ENCODE measurements at regions of chr21 and their contacts with region 1.

Region 1: DNA sequence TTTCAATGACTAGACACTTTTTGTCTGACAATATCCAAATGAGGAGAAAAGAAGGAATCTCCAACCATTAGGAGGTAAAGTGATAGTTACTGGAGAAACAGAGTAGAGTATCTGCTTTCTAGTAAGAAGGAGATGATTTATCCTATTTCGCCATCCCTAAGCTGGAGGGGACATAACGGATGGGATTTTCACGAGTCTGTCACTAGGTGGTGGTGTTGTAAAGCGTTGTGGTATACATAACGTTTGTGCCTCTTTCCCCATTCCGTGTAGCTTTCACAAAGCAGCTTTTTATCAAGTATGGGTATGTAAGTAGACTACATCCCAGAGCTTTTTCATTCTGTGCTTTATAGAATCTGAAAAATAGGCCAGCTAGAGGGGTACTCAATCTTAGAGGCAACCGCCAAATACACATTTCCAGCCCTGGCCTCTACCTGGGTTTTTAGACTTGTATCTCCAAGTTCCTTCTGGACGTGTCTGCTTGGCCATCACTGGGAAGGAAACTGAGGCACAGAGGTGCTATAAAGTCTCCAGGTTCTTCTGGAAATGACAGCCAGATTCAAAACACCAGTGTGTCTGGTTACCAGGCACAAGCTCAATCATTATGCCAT is 33.3 kb upstream of the FAM3B start:
- DNase-seq: peak in 1 of 5 donors; percentile 62
- H3K4me3 ChIP-seq: no peak overlapping the region
- H3K27ac ChIP-seq: no peak overlapping the region
- H3K4me1 ChIP-seq: no peaks in the 10 kb centered on the region
- H3K27me3 ChIP-seq: no peaks in the 10 kb centered on the region
- CTCF ChIP-seq: peak; percentile 34 to 67 (median 47)
- EP300 ChIP-seq: no peak
- POLR2A ChIP-seq: no peak

Region 2: GRCh38 chr21:41328660-41329607 is 45.6 kb after region 1 on chr21:
- intact Hi-C with region 1: no loop called
- DNase-seq: no peak
- H3K4me3 ChIP-seq: no peak overlapping the region
- H3K27ac ChIP-seq: no peak overlapping the region
- H3K4me1 ChIP-seq: no peaks in the 10 kb centered on the region
- H3K27me3 ChIP-seq: no peaks in the 10 kb centered on the region
- CTCF ChIP-seq: no peak
- EP300 ChIP-seq: no peak
- POLR2A ChIP-seq: no peak

Region 3: GRCh38 chr21:41460578-41461527 is 177.5 kb after region 1 on chr21:
- intact Hi-C with region 1: loop called in 3 of 4 experiments (anchors 5 to 10 kb)
- DNase-seq: peak; percentile 67 to 79 (median 69)
- H3K4me3 ChIP-seq: no peak overlapping the region
- H3K27ac ChIP-seq: no peak overlapping the region
- H3K4me1 ChIP-seq: peaks cover 1% of the 10 kb centered on the region
- H3K27me3 ChIP-seq: no peaks in the 10 kb centered on the region
- CTCF ChIP-seq: peak; percentile 42 to 51 (median 49)
- EP300 ChIP-seq: no peak
- POLR2A ChIP-seq: no peak

Region 4: DNA sequence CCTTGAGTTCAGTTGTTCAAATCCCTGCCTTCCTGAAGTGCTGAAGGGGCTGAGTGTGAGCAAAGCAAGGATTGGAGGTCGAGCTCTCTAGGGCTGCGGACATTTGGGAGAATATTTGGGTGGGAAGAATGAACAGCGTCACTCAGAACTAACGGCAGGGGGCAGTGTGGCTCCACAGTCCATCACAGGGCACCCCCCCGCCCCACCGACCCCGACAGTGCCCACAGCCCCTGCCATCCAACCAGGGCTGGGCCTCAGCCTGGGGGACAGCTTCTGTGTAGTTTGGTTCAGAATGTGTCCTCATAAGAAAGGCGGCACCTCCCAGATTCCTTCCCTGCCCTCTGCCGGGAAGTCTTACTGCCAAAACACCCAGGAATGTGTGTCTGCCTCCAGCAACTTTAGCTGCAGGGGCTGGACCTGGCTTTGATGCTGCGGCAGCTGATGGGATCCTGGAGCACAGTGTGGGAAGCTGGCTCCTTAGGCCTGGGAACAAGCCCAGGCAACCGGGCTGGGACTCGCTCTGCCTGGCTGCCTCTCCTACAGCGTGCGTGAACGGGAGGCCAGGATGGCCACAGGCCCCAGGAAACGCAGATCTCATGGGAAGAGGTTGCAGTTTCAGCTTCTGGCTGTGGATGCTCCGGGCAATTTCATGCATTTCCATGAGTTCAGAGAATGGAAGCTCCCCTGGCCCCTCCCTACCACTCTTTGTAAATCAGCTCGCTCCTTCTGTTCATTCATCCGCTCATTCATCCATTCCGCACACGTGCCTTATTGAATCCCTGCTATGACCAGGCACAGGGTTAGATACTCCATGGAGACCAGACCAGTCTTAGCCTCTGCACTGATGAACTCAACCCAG is 329.6 kb after region 1 on chr21:
- intact Hi-C with region 1: loop called in 1 of 4 experiments (anchors 5 kb)
- DNase-seq: peak; percentile 74 to 88 (median 79)
- H3K4me3 ChIP-seq: no peak overlapping the region
- H3K27ac ChIP-seq: peak overlapping the region; percentile 2 to 22
- H3K4me1 ChIP-seq: peaks cover 1% of the 10 kb centered on the region
- H3K27me3 ChIP-seq: no peaks in the 10 kb centered on the region
- CTCF ChIP-seq: peak; percentile 48 to 81 (median 60)
- EP300 ChIP-seq: no peak
- POLR2A ChIP-seq: no peak

Region 5: DNA sequence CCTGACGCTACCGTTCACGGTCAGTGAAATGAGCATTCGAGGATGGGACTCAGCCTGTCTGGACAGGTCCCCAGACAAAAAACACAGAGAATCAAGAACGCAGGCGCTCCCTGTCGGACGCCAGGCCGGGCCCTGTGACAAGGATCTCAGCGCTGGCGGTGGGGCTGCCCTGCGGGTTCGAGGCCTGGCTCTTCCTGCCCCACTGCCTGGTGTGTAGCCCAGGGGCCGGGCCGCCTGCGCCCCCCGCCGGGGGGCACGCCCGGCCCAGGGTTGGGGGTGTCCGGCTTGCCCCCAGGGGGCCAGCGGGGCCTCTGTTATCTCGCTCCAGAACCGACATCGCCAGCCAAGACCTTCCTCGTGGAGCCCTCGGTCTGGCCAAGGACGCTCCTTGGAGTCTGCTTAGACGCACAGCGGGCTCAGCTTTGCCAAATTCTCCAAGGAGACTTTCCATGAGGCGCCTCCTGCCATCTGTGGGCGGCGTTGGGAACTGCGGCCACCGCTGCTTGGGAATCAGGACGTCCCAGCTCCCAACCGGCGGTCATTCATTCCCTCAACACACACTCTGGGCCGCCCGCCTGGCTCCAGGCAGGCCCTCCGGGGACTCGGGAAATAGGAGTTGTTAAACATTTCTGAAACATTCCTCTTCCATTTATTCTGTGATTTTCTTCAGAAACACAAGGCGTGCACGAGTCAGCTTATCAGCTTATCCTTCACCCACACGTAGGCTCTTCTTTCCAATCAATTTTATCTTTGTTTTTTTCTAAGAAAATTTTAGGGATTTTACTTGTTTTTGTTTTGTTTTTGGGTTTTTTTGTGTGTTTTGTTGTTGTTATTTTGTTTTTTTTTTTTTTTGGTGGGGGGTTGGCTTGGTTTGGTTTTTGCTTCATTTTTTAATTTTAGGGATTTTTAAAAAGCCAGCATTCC is 494.9 kb after region 1 on chr21:
- intact Hi-C with region 1: loop called in 1 of 4 experiments (anchors 10 kb)
- DNase-seq: peak; percentile 83 to 88 (median 83)
- H3K4me3 ChIP-seq: no peak overlapping the region
- H3K27ac ChIP-seq: no peak overlapping the region
- H3K4me1 ChIP-seq: no peaks in the 10 kb centered on the region
- H3K27me3 ChIP-seq: no peaks in the 10 kb centered on the region
- CTCF ChIP-seq: peak; percentile 65 to 84 (median 75)
- EP300 ChIP-seq: no peak
- POLR2A ChIP-seq: no peak

Region 6: GRCh38 chr21:41816220-41817165 is 533.2 kb after region 1 on chr21:
- intact Hi-C with region 1: loop called in 1 of 4 experiments (anchors 10 kb)
- DNase-seq: peak; percentile 60 to 78 (median 72)
- H3K4me3 ChIP-seq: no peak overlapping the region
- H3K27ac ChIP-seq: no peak overlapping the region
- H3K4me1 ChIP-seq: no peaks in the 10 kb centered on the region
- H3K27me3 ChIP-seq: no peaks in the 10 kb centered on the region
- CTCF ChIP-seq: peak; percentile 56 to 74 (median 61)
- EP300 ChIP-seq: no peak
- POLR2A ChIP-seq: no peak